Left ventricle myocardium superior (tissue), 1 donor: ENCODE measurements at regions of chr7 and their contacts with region 1.

Region 1: GRCh38 chr7:93043385-93043985 is 74.3 kb downstream of the SAMD9 start:
- DNase-seq: peak; percentile 33
- ATAC-seq: peak; percentile 50

Region 2: DNA sequence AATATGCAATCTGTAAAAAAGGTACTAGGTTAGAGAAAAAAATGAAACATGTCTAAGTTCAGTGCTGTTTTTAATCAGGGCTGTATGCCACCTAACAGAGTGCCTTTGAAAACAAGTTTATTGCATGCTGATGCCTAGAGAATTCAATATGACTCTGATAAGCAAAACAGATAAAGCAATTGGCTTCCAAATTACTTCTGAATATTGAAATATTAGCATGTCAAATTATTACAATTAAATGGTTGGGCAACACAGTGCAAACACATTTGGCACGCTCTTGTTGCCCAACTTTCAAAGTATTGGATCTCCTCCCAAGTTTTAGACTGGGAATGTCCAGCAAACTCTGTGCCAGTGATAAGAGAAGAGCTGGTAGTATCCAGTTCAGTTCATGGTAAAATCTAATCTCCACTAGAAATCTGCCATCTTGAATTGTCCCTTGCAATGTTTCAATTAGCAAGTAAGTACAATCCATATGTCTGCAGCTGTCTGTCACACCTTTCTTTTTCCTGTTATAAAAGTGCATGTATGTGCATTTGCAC is 388.1 kb before region 1 on chr7:
- intact Hi-C with region 1: no loop called
- DNase-seq: no peak
- ATAC-seq: peak; percentile 57

Region 3: GRCh38 chr7:92843034-92843760 is 200.3 kb before region 1 on chr7:
- intact Hi-C with region 1: loop called (anchors 10 kb)
- DNase-seq: no peak
- ATAC-seq: no peak